ENCODE measurements at regions of chr20 and their contacts with region 1.

Region 1: GRCh38 chr20:44609511-44610312 is 27.3 kb downstream of the PKIG start:
- DNase-seq: peak; percentile 55
- H3K4me3 ChIP-seq: no peak overlapping the region
- H3K27ac ChIP-seq: peak overlapping the region; percentile 39
- H3K27me3 ChIP-seq: no peaks in the 10 kb centered on the region
- CTCF ChIP-seq: peak; percentile 100

Region 2: DNA sequence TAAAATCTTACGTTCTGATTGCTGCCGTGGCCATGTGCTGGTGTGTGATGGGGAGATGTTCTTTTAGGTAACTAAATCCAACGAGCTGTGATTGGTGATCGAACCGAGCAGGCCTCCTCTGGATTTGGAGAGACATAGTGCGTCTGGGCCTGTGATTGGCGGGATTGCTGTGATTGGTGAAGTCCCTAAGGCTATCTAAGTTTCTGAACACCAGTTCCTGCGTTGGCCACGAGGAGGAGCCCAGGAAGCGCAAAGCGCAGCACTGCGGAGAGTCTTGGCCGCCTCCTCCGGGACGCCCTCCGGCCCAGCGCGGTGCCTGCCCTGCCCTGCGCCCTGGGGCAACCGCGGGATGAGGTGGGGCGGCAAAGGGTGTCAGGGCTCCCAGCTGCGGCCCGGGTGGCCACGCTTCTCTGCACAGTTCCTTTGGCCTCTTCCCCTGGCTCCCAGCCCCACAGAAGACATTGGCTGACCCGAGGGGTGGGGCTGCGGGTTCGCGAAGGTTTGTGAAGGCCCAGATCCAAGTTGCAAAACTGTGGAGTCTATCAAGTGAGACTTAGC is 221.2 kb before region 1 on chr20:
- CTCF ChIA-PET with region 1: interaction called, 31 read pairs
- POLR2A ChIA-PET with region 1: interaction called, 7 read pairs
- DNase-seq: peak; percentile 21
- H3K4me3 ChIP-seq: no peak overlapping the region
- H3K27ac ChIP-seq: no peak overlapping the region
- H3K27me3 ChIP-seq: peaks cover 19% of the 10 kb centered on the region
- CTCF ChIP-seq: peak; percentile 81

Region 3: GRCh38 chr20:44460795-44461141 is 148.9 kb before region 1 on chr20:
- CTCF ChIA-PET with region 1: interaction called, 11 read pairs
- POLR2A ChIA-PET with region 1: no interaction called
- DNase-seq: no peak
- H3K4me3 ChIP-seq: no peak overlapping the region
- H3K27ac ChIP-seq: no peak overlapping the region
- H3K27me3 ChIP-seq: peaks cover 16% of the 10 kb centered on the region
- CTCF ChIP-seq: peak; percentile 56

Region 4: GRCh38 chr20:44475694-44476560 is 133.8 kb before region 1 on chr20 and contains the start of gene TTPAL:
- CTCF ChIA-PET with region 1: interaction called, 10 read pairs
- POLR2A ChIA-PET with region 1: no interaction called
- DNase-seq: peak; percentile 44
- H3K4me3 ChIP-seq: peak within 1 kb of the TSS; percentile 96
- H3K27ac ChIP-seq: peak within 1 kb of the TSS; percentile 61
- H3K27me3 ChIP-seq: no peaks in the 10 kb centered on the region
- CTCF ChIP-seq: peak; percentile 36; the same call in 1 of the 2 replicates
- polyA plus RNA-seq, gene TTPAL: 11.2 and 12.6 TPM in 2 replicates

Region 5: DNA sequence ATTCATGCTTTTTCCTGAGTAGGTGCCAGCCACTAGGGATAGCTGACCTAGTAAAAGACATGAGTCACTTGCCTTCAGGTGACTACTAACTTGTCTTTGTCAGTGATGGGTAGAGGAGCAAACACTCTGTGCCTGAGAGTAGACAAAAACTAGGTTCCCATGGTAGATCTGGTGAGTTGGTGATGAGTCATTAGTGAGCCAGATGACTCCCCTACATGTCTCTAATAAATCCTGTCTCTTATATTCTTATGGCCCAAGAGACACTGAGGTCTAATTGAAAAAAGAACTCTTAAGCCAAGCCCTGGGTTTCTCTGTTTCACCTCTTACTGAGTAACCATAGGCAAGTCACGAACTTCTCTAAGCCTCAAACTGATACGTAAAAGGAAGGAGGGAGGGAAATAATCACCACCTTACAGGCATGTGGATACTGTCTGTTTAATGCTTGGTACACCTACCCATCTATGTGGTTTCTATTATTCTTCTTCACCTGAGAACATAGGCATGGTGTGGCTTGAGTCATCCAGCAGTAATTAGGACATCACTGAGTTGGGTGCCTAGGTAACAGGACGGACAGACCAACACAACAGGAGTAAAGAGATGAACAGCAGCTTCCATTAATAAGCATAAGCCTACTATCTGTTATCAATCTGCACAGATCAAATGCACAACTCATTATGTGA is 113.8 kb before region 1 on chr20:
- CTCF ChIA-PET with region 1: interaction called, 14 read pairs
- POLR2A ChIA-PET with region 1: no interaction called
- DNase-seq: peak; percentile 88
- H3K4me3 ChIP-seq: no peak overlapping the region
- H3K27ac ChIP-seq: peak overlapping the region; percentile 89
- H3K27me3 ChIP-seq: no peaks in the 10 kb centered on the region
- CTCF ChIP-seq: no peak

Region 6: DNA sequence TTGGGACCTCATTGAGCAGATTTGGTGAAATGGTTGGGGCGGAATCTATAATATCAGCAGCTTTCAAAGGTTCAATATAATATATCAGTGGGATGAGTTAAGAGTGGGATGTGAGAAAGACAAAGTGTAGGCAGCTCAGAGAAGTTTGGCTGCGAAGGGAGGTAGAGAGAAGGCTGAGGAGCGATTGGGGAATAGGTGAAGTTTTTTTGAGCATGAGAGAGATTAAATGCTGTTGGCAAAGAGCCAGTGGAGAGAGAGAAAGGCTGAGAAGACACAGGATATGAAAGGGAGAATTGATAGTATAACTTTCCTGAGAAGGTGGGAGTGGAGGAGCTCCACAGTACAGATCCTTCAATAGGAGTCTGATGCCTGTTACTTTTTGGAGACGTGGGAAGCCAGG is 75.8 kb before region 1 on chr20:
- CTCF ChIA-PET with region 1: interaction called, 10 read pairs
- POLR2A ChIA-PET with region 1: no interaction called
- DNase-seq: no peak
- H3K4me3 ChIP-seq: no peak overlapping the region
- H3K27ac ChIP-seq: no peak overlapping the region
- H3K27me3 ChIP-seq: no peaks in the 10 kb centered on the region
- CTCF ChIP-seq: no peak

Region 7: GRCh38 chr20:44762466-44763140 is 152.9 kb after region 1 on chr20:
- CTCF ChIA-PET with region 1: no interaction called
- POLR2A ChIA-PET with region 1: no interaction called
- DNase-seq: no peak
- H3K4me3 ChIP-seq: no peak overlapping the region
- H3K27ac ChIP-seq: no peak overlapping the region
- H3K27me3 ChIP-seq: peaks cover 29% of the 10 kb centered on the region
- CTCF ChIP-seq: no peak